H1 (cell line): ENCODE measurements at regions of chr2 and their contacts with region 1.

Region 1: DNA sequence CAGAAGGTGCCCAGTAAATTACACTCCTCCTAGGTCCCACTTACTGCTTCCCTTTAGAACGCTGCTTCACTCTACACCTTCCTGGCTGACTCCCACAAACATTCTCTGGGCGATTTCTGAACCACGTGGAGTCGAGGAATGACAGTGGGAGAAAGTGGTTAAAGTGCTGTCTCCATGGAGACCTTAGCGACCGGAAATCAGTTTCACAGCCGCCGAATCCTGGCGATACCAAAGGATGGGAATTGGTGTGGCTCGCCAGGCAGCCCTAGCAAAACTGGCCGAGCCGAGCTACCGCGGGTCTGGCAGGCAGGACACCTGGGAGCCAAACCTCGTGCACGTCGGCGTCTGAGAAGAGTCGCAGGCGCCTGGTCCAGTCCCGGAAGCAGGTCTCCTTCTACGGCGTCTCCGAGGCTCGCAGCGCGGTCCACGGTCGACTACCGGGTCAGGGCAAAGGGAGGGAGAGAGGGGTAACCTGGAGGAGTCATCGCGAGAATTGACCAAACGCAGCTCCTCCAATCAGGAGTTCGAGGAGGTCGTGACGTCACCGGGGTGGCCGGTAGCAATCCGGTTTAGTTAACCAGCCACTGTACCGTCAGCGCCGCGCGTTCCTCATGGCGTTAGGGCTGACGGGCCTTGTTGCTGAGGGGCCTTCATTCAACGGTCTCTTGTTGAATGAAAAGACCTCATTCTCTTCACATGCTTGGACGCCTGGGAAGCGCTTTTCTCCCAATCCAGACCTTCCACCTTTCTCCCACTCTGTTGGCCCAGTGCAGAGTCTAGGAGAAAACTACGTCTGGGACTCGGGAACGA is at the start of gene THADA:
- DNase-seq: peak; percentile 97
- H3K4me3 ChIP-seq: peak within 1 kb of the TSS; percentile 85 to 90 (median 89)
- H3K27ac ChIP-seq: peak within 1 kb of the TSS; percentile 94
- H3K4me1 ChIP-seq: peaks cover 0 to 6% (median 0%) of the 10 kb centered on the region in 4 experiments; a peak in 2 of 7 replicates
- H3K27me3 ChIP-seq: no peaks in the 10 kb centered on the region
- CTCF ChIP-seq: no peak
- EP300 ChIP-seq: no peak
- POLR2A ChIP-seq: peak; percentile 98 to 99
- RAD21 ChIP-seq: no peak
- total RNA-seq, gene THADA: 26.8 and 31.4 TPM in 2 replicates

Region 2: GRCh38 chr2:43576981-43577892 is 18.6 kb before region 1 on chr2:
- CTCF ChIA-PET with region 1: interaction called, 16 read pairs
- POLR2A ChIA-PET with region 1: no interaction called
- DNase-seq: no peak
- H3K4me3 ChIP-seq: no peak overlapping the region
- H3K27ac ChIP-seq: 0 out of 2 replicates have a peak overlapping the region, but pooled peaks have one; percentile 17
- H3K4me1 ChIP-seq: no peaks in the 10 kb centered on the region
- H3K27me3 ChIP-seq: no peaks in the 10 kb centered on the region
- CTCF ChIP-seq: peak in 2 of 3 experiments; percentile 45 to 59; a peak in 3 of 4 replicates
- EP300 ChIP-seq: no peak
- POLR2A ChIP-seq: no peak
- RAD21 ChIP-seq: peak; percentile 25 to 31; a peak in 2 of 4 replicates

Region 3: DNA sequence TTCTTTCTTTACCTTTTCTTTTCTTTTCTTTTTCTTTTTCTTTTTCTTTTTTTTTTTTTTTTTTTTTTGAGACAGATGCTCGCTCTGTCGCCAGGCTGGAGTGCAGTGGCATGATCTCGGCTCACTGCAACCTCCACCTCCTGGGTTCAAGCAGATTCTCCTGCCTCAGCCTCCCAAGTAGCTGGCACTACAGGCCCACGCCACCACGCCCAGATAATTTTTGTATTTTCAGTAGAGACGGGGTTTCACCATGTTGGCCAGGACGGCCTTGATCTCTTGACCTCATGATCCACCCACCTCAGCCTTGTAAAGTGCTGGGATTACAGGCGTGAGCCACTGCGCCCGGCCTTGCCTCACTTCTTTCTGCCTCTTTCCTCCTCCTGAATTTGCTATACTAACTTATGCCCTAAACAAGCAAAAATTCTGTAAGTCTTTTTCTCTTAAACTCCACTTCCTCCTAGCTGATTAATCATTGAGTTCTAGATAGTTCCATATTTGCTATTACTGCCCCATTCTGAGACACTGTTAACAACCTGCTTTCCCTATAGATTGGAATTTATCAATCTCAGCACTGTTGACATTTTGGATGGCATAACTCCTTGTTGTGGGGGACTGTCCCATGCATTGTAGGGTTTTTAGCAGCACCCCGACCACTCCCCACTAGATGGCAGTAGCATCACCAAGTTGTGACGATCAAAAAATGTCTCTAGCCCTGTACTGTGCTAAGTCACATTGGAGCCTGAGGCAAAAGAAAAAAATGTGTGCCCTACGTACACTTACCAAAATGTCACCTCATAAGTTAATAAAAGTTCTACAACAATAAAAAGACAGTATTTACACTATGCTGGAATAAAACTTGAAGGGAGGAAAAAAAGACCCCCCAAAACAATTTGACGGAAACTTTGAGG is 16.4 kb after region 1 on chr2:
- CTCF ChIA-PET with region 1: interaction called, 46 read pairs
- POLR2A ChIA-PET with region 1: interaction called, 5 read pairs
- DNase-seq: peak in 1 of 2 experiments; percentile 84
- H3K4me3 ChIP-seq: no peak overlapping the region
- H3K27ac ChIP-seq: no peak overlapping the region
- H3K4me1 ChIP-seq: peaks cover 0 to 3% (median 0%) of the 10 kb centered on the region in 4 experiments; a peak in 1 of 7 replicates
- H3K27me3 ChIP-seq: no peaks in the 10 kb centered on the region
- CTCF ChIP-seq: peak; percentile 73 to 91 (median 74)
- EP300 ChIP-seq: no peak
- POLR2A ChIP-seq: no peak
- RAD21 ChIP-seq: peak; percentile 77 to 83